ENCODE measurements at regions of chr1 and their contacts with region 1.

Region 1: GRCh38 chr1:197944485-197944884 is 27.3 kb downstream of the LHX9 start:
- DNase-seq: no peak
- ATAC-seq: no peak
- H3K4me3 ChIP-seq: no peak overlapping the region
- H3K27ac ChIP-seq: no peak overlapping the region
- H3K4me1 ChIP-seq: no peaks in the 10 kb centered on the region; the same call in 2 of the 3 replicates
- CTCF ChIP-seq: no peak
- EP300 ChIP-seq: no peak
- POLR2A ChIP-seq: no peak
- RAD21 ChIP-seq: no peak

Region 2: DNA sequence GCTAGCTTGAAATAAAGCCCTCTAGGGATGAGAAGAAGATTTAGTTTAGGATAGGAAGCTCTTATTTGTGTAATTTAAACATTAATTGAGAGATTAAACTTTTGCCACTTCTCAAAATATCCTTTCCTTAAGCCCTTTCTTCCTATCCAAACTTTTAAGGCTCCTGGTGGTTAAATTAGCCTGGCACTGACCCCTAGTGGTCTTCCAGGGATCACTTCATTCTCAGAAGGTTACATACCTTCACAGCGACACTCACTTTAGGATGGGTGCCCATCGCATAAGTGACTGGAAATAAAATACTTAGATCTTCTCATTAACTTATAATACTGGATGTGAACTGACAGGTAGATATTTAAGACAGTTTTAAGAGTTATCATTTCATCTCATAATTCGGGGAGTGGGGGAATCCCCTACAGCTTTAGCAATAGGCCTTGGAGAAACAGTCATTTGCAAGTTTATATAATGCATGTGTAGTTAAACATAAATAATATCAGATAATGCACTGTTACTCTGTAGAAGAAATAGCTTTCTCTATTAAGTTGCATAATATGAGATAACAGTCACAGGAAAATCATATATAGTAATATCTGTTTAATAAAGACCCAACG is 19.9 kb before region 1 on chr1:
- CTCF ChIA-PET with region 1: interaction called, 12 read pairs
- POLR2A ChIA-PET with region 1: no interaction called
- DNase-seq: peak; percentile 65 to 75
- ATAC-seq: peak; percentile 84 to 91; a peak in 5 of 6 replicates
- H3K4me3 ChIP-seq: no peak overlapping the region
- H3K27ac ChIP-seq: no peak overlapping the region
- H3K4me1 ChIP-seq: peaks cover 3% of the 10 kb centered on the region; the same call in 1 of the 3 replicates
- CTCF ChIP-seq: peak; percentile 89
- EP300 ChIP-seq: no peak
- POLR2A ChIP-seq: no peak
- RAD21 ChIP-seq: peak; percentile 81 to 89

Region 3: DNA sequence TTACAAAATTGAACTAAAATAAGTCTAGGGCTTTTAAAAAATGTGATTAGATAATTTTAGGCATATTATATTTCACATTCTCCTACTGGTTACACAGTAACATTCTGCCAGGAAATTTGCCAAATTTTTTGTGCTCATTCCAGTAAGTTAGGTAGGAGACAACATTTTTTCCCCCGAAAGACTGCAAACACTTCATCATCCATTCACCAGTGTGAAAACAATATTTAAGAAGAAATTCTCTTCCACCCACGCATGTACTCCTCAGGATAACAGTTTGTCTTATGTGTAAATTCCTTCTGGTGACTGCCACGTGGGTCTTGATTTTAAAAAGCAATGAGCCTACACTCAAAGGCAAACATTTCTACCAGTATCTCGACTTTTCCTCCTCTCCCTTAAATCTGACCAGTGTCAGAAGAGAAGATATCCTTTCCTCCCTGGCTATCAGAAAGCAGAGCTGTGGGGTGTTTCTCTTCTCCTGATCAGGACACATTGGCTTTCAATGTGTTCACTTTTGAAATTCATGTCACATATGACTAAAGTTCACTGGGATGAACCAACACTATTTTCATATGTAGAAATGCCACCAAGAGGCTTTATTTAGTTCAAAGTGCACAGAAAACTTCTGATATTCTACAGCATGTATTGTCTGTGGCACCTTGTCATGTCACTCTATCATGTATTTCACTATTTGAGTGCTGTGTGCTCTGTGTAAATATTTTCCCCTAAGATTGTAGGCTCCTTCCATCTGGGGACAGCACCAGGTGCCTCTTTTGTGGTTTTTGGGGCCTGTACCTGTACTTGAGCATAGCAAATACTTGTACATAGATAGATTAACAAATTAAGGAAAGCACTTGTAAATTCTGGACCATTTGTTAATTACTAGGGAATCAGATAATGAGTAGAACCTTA is 11.3 kb after region 1 on chr1:
- CTCF ChIA-PET with region 1: no interaction called
- POLR2A ChIA-PET with region 1: no interaction called
- DNase-seq: no peak
- ATAC-seq: no peak
- H3K4me3 ChIP-seq: no peak overlapping the region
- H3K27ac ChIP-seq: peak overlapping the region; percentile 47 to 48; a peak in 5 of 6 replicates
- H3K4me1 ChIP-seq: peaks cover 24% of the 10 kb centered on the region
- CTCF ChIP-seq: no peak
- EP300 ChIP-seq: no peak
- POLR2A ChIP-seq: no peak
- RAD21 ChIP-seq: no peak